CD4-positive, alpha-beta T cell (primary cell): ENCODE measurements at regions of chr1 and their contacts with region 1.

Region 1: GRCh38 chr1:187091666-187092065 is 262.9 kb downstream of the PLA2G4A start:
- DNase-seq: no peak
- ATAC-seq: no peak
- H3K4me3 ChIP-seq: no peak overlapping the region
- H3K4me3 Mint-ChIP-seq: peak overlapping the region; percentile 26
- H3K27ac ChIP-seq: no peak overlapping the region
- H3K27ac Mint-ChIP-seq: peak overlapping the region; percentile 9
- H3K4me1 ChIP-seq: peaks cover 7% of the 10 kb centered on the region
- H3K4me1 Mint-ChIP-seq: peaks cover 21% of the 10 kb centered on the region
- H3K27me3 ChIP-seq: no peaks in the 10 kb centered on the region
- H3K27me3 Mint-ChIP-seq: no peaks in the 10 kb centered on the region
- CTCF ChIP-seq: no peak

Region 2: GRCh38 chr1:187067160-187067559 is 24.5 kb before region 1 on chr1:
- CTCF ChIA-PET with region 1: no interaction called
- POLR2A ChIA-PET with region 1: interaction called, 11 read pairs
- intact Hi-C with region 1: no loop called
- DNase-seq: no peak
- ATAC-seq: no peak
- H3K4me3 ChIP-seq: no peak overlapping the region
- H3K4me3 Mint-ChIP-seq: no peak overlapping the region
- H3K27ac ChIP-seq: no peak overlapping the region
- H3K27ac Mint-ChIP-seq: no peak overlapping the region
- H3K4me1 ChIP-seq: no peaks in the 10 kb centered on the region
- H3K4me1 Mint-ChIP-seq: no peaks in the 10 kb centered on the region
- H3K27me3 ChIP-seq: no peaks in the 10 kb centered on the region
- H3K27me3 Mint-ChIP-seq: no peaks in the 10 kb centered on the region
- CTCF ChIP-seq: no peak

Region 3: DNA sequence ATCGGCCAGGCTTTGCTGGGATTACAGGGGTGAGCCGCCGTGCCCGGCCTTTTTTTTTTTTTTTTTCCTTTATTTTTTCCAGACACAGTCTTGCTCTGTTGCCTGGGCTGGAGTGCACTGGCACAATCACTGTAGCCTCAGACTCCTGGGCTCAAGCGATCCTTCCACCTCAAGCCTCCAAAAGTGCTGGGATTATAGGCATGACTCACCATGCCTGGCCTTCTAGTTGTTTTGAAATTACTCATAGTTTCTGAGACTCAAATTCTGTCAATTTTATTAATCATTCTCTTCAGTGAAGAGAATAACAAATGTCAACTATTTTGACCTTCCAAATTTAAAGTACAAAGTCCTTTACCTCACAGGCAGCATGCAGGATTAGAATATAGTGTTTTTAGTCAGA is 111.6 kb after region 1 on chr1:
- CTCF ChIA-PET with region 1: no interaction called
- POLR2A ChIA-PET with region 1: no interaction called
- intact Hi-C with region 1: no loop called
- DNase-seq: no peak
- ATAC-seq: no peak
- H3K4me3 ChIP-seq: no peak overlapping the region
- H3K4me3 Mint-ChIP-seq: no peak overlapping the region
- H3K27ac ChIP-seq: no peak overlapping the region
- H3K27ac Mint-ChIP-seq: no peak overlapping the region
- H3K4me1 ChIP-seq: no peaks in the 10 kb centered on the region
- H3K4me1 Mint-ChIP-seq: no peaks in the 10 kb centered on the region
- H3K27me3 ChIP-seq: no peaks in the 10 kb centered on the region
- H3K27me3 Mint-ChIP-seq: no peaks in the 10 kb centered on the region
- CTCF ChIP-seq: no peak